Mammary epithelial cell (primary cell): ENCODE measurements at regions of chr13 and their contacts with region 1.

Region 1: GRCh38 chr13:49858183-49858856 is 65.8 kb upstream of the KPNA3 start:
- DNase-seq: peak; percentile 79
- H3K4me3 ChIP-seq: no peak overlapping the region
- H3K27ac ChIP-seq: peak overlapping the region; percentile 46
- H3K4me1 ChIP-seq: peaks cover 22% of the 10 kb centered on the region
- H3K27me3 ChIP-seq: no peaks in the 10 kb centered on the region
- CTCF ChIP-seq: no peak

Region 2: GRCh38 chr13:49810567-49811526 is 47.5 kb before region 1 on chr13:
- CTCF ChIA-PET with region 1: no interaction called
- dilution Hi-C with region 1: loop called (anchors 5 kb)
- in situ Hi-C with region 1: no loop called
- intact Hi-C with region 1: no loop called
- DNase-seq: peak; percentile 49
- H3K4me3 ChIP-seq: no peak overlapping the region
- H3K27ac ChIP-seq: no peak overlapping the region
- H3K4me1 ChIP-seq: no peaks in the 10 kb centered on the region
- H3K27me3 ChIP-seq: no peaks in the 10 kb centered on the region
- CTCF ChIP-seq: no peak

Region 3: GRCh38 chr13:49877629-49878218 is 19.4 kb after region 1 on chr13:
- CTCF ChIA-PET with region 1: no interaction called
- dilution Hi-C with region 1: no loop called
- in situ Hi-C with region 1: no loop called
- intact Hi-C with region 1: no loop called
- DNase-seq: peak; percentile 14
- H3K4me3 ChIP-seq: no peak overlapping the region
- H3K27ac ChIP-seq: no peak overlapping the region
- H3K4me1 ChIP-seq: no peaks in the 10 kb centered on the region
- H3K27me3 ChIP-seq: no peaks in the 10 kb centered on the region
- CTCF ChIP-seq: no peak

Region 4: GRCh38 chr13:49936085-49936940 is 78.0 kb after region 1 on chr13 and contains the start of gene SPRYD7:
- CTCF ChIA-PET with region 1: no interaction called
- dilution Hi-C with region 1: no loop called
- in situ Hi-C with region 1: no loop called
- intact Hi-C with region 1: loop called (anchors 2 kb)
- DNase-seq: peak; percentile 98
- H3K4me3 ChIP-seq: peak within 1 kb of the TSS; percentile 94 to 100 (median 99)
- H3K27ac ChIP-seq: peak within 1 kb of the TSS; percentile 82
- H3K4me1 ChIP-seq: peaks cover 5% of the 10 kb centered on the region
- H3K27me3 ChIP-seq: no peaks in the 10 kb centered on the region
- CTCF ChIP-seq: peak; percentile 82 to 92
- total RNA-seq, gene SPRYD7: 12.0 to 17.0 TPM